CD4-positive, alpha-beta memory T cell (primary cell): ENCODE measurements at regions of chr4 and their contacts with region 1.

Region 1: DNA sequence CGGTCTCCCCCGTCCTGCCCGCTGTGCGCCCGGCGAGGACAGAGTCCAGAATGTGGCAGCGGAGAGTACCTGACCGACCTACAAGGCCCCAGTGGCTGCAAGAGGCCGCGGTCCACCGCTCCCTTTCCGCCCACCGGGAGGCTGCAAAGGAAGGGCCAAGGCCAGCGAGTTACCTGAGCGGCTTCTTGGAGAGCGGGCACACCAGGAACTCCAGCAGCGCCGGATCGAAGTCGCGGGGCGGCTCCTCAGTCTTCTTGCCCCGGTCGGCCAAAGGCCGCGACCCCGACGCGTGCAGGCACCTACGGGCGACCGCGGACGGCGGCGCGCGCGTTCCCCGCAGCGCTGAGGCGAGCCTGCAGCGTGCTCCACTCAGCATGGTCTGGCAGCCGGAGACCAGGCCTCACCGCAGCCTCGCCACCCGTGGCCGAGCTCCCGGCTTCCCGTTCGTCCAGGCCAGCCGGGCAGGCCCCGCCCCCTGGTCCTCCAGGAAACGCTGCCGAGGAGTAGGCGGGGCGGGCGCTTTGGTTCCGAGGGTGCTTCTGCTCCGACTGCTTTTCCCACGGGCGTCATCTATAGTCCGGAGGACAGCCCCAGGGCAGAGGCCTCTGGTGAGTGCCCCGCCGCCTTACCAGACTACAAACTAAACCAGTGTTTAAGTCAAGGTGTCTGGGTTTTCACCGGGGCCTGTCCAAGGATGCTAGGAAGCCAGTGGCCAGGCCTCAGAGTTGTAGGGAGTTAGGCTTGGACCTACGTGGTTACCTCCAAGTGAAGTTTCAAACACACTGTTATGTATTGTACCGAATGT is at the start of gene PYURF:
- DNase-seq: peak; percentile 60 to 73 (median 64)
- H3K4me3 ChIP-seq: peak within 1 kb of the TSS; percentile 62 to 69
- H3K4me3 Mint-ChIP-seq: peak within 1 kb of the TSS; percentile 91 to 97 (median 94)
- H3K27ac ChIP-seq: peak within 1 kb of the TSS; percentile 60
- H3K27ac Mint-ChIP-seq: peak within 1 kb of the TSS; percentile 89 to 96 (median 93)
- H3K4me1 ChIP-seq: peaks cover 17% of the 10 kb centered on the region
- H3K4me1 Mint-ChIP-seq: peaks cover 22 to 46% (median 32%) of the 10 kb centered on the region in 4 donors
- H3K27me3 ChIP-seq: no peaks in the 10 kb centered on the region
- H3K27me3 Mint-ChIP-seq: no peaks in the 10 kb centered on the region
- total RNA-seq, gene PYURF: 54.5 to 60.4 TPM

Region 2: DNA sequence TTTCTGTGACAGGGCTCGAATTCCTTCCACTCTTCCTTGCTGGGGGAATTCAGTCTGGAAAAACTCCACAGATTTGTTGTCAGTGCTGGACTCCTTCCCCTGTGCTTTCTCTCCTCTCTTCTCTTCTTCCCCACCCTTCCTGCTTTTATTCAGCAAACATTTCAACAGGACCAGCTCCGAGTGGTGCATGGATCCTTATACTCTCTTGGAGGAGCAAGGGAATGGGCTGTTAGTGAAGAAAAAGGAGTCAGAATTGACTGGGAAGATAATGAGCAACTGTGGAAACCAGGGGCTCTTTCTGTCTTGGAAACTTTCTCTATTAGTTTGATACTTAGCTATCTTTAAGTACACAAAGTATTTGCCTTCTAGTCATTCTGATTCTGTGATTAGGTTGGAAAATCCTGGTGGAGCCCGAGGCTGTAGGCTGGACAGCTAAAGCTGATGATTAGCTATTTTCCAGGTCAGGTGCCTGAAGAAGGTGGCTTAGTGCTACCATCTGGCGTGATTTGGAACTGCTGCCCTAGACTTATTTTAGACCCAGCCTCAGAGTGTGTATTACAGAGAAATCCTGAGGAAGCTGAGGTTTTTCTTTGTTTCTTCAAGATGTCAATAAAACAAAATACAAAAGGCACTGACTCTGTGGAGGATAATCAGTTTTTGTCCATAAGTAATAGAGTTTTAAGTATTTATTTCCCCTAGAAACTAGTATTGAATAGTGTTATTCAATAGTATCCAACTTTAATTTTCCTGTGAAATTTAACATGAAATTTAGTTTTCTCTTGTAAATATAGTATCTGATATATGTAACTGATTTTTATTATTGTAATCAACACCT is 135.7 kb after region 1 on chr4:
- CTCF ChIA-PET with region 1: interaction called, 7 read pairs
- POLR2A ChIA-PET with region 1: no interaction called
- intact Hi-C with region 1: loop called (anchors 1 kb)
- DNase-seq: peak; percentile 32 to 47 (median 41)
- H3K4me3 ChIP-seq: no peak overlapping the region
- H3K4me3 Mint-ChIP-seq: no peak overlapping the region
- H3K27ac ChIP-seq: no peak overlapping the region
- H3K27ac Mint-ChIP-seq: peak overlapping the region in 5 of 7 donors; percentile 2 to 71 (median 55)
- H3K4me1 ChIP-seq: peaks cover 5% of the 10 kb centered on the region
- H3K4me1 Mint-ChIP-seq: peaks cover 6 to 18% (median 9%) of the 10 kb centered on the region in 4 donors
- H3K27me3 ChIP-seq: no peaks in the 10 kb centered on the region
- H3K27me3 Mint-ChIP-seq: no peaks in the 10 kb centered on the region